Heart left ventricle (tissue), 16 donors: ENCODE measurements at regions of chr15 and their contacts with region 1.

Region 1: GRCh38 chr15:99669214-99669613 is 64.0 kb downstream of the LYSMD4 start:
- DNase-seq: no peak
- ATAC-seq: peak; percentile 76 to 89 (median 82)
- H3K4me3 ChIP-seq: no peak overlapping the region
- H3K27ac ChIP-seq: peak overlapping the region; percentile 3 to 79 (median 53)
- H3K4me1 ChIP-seq: peaks cover 0 to 42% (median 10%) of the 10 kb centered on the region in 12 donors
- H3K27me3 ChIP-seq: no peaks in the 10 kb centered on the region
- CTCF ChIP-seq: no peak
- POLR2A ChIP-seq: no peak

Region 2: DNA sequence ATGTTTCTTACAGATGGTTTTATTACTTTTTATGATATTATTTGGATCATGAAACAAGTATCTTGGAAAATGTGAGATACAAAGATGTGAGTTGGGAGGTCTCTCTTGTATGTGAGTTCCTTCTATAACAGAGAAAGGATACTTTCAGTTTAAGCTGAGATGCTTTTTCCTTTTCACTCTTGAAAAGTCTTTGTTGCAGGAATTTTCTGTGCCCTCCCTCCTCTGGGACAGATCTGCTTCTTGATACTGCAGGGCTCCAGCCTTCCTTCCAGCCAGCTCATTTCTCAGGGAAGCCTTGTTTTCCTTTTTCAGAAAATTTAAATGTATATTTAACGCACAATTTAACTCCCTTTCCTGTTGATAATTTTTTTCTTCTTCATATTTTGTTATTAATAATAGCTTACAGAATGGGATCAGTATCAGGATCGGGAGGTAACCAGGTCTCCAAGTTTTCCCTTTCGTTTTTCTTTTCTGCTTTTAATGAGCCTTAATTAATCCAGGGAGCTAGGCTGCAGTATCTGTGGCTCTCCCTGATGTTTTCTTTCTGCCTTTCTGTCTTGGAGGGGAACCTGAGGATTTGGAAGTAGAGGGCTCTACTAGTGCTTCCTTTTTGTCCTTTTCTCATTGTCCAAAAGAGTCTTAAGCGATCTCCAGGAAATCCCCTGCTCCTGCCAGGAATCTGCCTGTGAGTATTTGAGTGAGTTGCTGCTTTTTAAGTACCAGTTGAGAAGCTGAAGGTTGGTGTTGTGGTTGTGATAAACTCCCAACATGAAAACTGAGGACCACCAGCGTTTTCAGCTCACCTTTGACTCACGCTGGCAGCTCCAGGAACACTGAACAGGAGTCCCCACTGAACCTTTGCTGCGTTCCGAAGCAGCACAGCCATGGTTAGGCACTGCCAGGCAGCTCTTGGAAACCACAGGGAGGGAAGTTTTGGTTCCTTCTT is 915.2 kb before region 1 on chr15:
- intact Hi-C with region 1: no loop called
- DNase-seq: no peak
- ATAC-seq: peak in 3 of 4 donors; percentile 51 to 61 (median 57)
- H3K4me3 ChIP-seq: peak overlapping the region in 9 of 12 donors; percentile 3 to 51 (median 35)
- H3K27ac ChIP-seq: peak overlapping the region in 4 of 12 donors; percentile 8 to 50 (median 44)
- H3K4me1 ChIP-seq: peaks cover 0 to 48% (median 24%) of the 10 kb centered on the region in 12 donors
- H3K27me3 ChIP-seq: no peaks in the 10 kb centered on the region
- CTCF ChIP-seq: no peak
- POLR2A ChIP-seq: no peak

Region 3: DNA sequence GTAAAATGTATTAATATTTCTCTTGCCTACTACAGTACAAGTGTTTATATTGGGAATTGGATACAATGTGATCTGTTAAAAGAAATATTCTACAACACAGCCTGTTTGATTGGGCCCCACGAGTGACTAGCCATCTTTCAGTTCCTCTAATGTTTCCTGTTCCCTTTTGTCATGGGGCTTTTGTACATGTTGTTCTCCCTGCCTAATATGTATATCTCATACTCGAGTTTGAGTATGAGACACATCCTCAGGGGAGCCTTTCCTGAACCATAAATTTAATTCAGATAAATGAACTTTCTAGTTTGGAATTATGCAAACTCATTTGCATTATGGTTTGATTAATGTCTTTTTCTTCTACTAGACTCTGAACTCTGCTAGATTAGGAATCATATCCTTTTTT is 38.0 kb before region 1 on chr15:
- intact Hi-C with region 1: loop called in 1 of 10 experiments (anchors 5 kb)
- DNase-seq: no peak
- ATAC-seq: peak; percentile 56 to 80 (median 66)
- H3K4me3 ChIP-seq: no peak overlapping the region
- H3K27ac ChIP-seq: peak overlapping the region in 11 of 12 donors; percentile 12 to 86 (median 48)
- H3K4me1 ChIP-seq: peaks cover 4 to 89% (median 61%) of the 10 kb centered on the region in 12 donors
- H3K27me3 ChIP-seq: no peaks in the 10 kb centered on the region
- CTCF ChIP-seq: no peak
- POLR2A ChIP-seq: no peak